Gastrocnemius medialis (tissue), 4 donors: ENCODE measurements at regions of chr7 and their contacts with region 1.

Region 1: GRCh38 chr7:137934941-137935883 is 66.7 kb downstream of the CREB3L2 start:
- DNase-seq: no peak
- ATAC-seq: no peak
- H3K4me3 ChIP-seq: no peak overlapping the region
- H3K27ac ChIP-seq: peak overlapping the region in 2 of 4 donors; percentile 6 to 81
- H3K4me1 ChIP-seq: peaks cover 52% of the 10 kb centered on the region in 2 donors
- H3K27me3 ChIP-seq: no peaks in the 10 kb centered on the region
- CTCF ChIP-seq: no peak
- POLR2A ChIP-seq: no peak

Region 2: GRCh38 chr7:137953665-137954470 is 18.7 kb after region 1 on chr7:
- in situ Hi-C with region 1: no loop called
- intact Hi-C with region 1: no loop called
- DNase-seq: no peak
- ATAC-seq: peak; percentile 29 to 32
- H3K4me3 ChIP-seq: no peak overlapping the region
- H3K27ac ChIP-seq: peak overlapping the region in 1 of 4 donors; percentile 3
- H3K4me1 ChIP-seq: peaks cover 32 to 49% of the 10 kb centered on the region in 2 donors
- H3K27me3 ChIP-seq: no peaks in the 10 kb centered on the region
- CTCF ChIP-seq: no peak
- POLR2A ChIP-seq: no peak

Region 3: GRCh38 chr7:137975221-137975620 is 40.0 kb after region 1 on chr7:
- in situ Hi-C with region 1: no loop called
- intact Hi-C with region 1: loop called (anchors 5 kb)
- DNase-seq: peak in 1 of 2 donors; percentile 46
- ATAC-seq: peak; percentile 43 to 51
- H3K4me3 ChIP-seq: no peak overlapping the region
- H3K27ac ChIP-seq: peak overlapping the region; percentile 63 to 75 (median 74)
- H3K4me1 ChIP-seq: peaks cover 8 to 42% of the 10 kb centered on the region in 2 donors
- H3K27me3 ChIP-seq: no peaks in the 10 kb centered on the region
- CTCF ChIP-seq: no peak
- POLR2A ChIP-seq: no peak